Dendritic cell treated with granulocyte-macrophage colony-stimulating factor and Interleukin-4, amounts not matched to agents 40 ng/mL and 50 ng/mL, for 4 days (primary cell): ENCODE measurements at regions of chr3 and their contacts with region 1.

Region 1: GRCh38 chr3:122055215-122055614 is at the start of gene CD86:
- H3K4me3 Mint-ChIP-seq: peak within 1 kb of the TSS; percentile 84
- H3K27ac Mint-ChIP-seq: peak within 1 kb of the TSS; percentile 89
- H3K4me1 Mint-ChIP-seq: peaks cover 29% of the 10 kb centered on the region
- H3K27me3 Mint-ChIP-seq: no peaks in the 10 kb centered on the region

Region 2: DNA sequence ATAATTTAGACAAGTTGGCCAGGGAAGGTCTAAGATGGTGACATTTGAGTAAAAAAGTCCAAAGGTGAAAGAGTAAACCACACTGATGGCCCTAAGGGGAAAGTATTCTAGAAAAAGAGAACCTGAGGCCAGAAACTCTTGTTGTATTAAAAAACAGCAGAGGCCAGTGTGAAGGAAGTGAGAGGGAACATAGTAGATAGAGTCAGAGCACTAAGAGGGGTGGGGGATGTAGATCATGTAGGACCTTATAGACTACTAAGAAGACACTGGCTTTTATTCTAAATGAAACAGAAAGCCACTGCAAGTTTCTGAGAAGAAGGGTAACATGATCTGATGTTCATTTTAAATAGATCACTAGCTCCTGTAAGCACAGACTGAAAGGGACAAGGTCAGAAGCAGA is 523.9 kb before region 1 on chr3:
- intact Hi-C with region 1: no loop called
- H3K4me3 Mint-ChIP-seq: no peak overlapping the region
- H3K27ac Mint-ChIP-seq: peak overlapping the region; percentile 36
- H3K4me1 Mint-ChIP-seq: no peaks in the 10 kb centered on the region
- H3K27me3 Mint-ChIP-seq: no peaks in the 10 kb centered on the region

Region 3: GRCh38 chr3:122074621-122075265 is 19.5 kb after region 1 on chr3:
- intact Hi-C with region 1: loop called (anchors 2 kb)
- H3K4me3 Mint-ChIP-seq: peak overlapping the region; percentile 20
- H3K27ac Mint-ChIP-seq: peak overlapping the region; percentile 85
- H3K4me1 Mint-ChIP-seq: peaks cover 73% of the 10 kb centered on the region
- H3K27me3 Mint-ChIP-seq: no peaks in the 10 kb centered on the region

Region 4: GRCh38 chr3:122092460-122093165 is 37.4 kb after region 1 on chr3:
- intact Hi-C with region 1: loop called (anchors 5 kb)
- H3K4me3 Mint-ChIP-seq: peak overlapping the region; percentile 48
- H3K27ac Mint-ChIP-seq: peak overlapping the region; percentile 81
- H3K4me1 Mint-ChIP-seq: peaks cover 39% of the 10 kb centered on the region
- H3K27me3 Mint-ChIP-seq: no peaks in the 10 kb centered on the region